Lower leg skin (tissue), 4 donors: ENCODE measurements at regions of chr5 and their contacts with region 1.

Region 1: DNA sequence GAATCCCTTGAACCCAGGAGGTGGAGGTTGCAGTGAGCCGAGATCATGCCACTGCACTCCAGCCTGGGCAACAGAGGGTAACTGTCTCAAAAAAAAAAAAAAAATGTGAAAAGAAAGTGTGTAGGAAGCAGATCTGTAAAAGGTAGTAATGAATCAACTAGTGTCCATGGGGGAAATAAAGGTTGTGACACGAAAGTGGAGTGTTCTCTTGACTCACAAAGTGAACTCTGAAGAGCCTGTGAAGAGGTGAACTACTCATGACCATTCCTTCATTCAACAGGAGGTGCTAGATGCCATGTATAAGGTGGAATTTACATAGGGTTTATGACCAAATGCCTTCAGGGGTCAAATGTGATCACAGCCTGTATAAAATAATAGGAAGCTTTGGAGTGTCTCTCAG is 12.8 kb downstream of the IQGAP2 start:
- DNase-seq: no peak
- H3K4me3 ChIP-seq: no peak overlapping the region
- CTCF ChIP-seq: no peak
- POLR2A ChIP-seq: no peak

Region 2: GRCh38 chr5:76379316-76379715 is 36.5 kb before region 1 on chr5:
- intact Hi-C with region 1: loop called (anchors 1 kb)
- DNase-seq: no peak
- H3K4me3 ChIP-seq: no peak overlapping the region
- CTCF ChIP-seq: no peak
- POLR2A ChIP-seq: no peak

Region 3: DNA sequence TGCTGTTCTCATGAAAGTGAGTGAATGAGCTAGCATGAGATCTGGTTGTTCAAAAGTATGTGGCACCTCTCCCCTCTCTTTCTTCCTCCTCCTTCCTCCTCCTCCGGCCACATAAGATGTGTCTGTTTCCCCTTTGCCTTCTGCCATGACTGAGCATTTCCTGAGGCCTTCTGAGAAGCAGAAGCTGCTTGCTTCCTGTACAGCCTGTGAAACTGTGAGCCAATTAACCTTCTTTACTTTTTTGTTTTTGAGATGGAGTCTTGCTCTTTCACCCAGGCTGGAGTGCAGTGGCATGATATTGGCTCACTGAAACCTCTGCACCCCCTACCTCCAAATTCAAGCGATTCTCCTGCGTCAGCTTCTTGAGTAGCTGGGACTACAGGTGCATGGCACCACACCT is 440.1 kb after region 1 on chr5:
- intact Hi-C with region 1: no loop called
- DNase-seq: no peak
- H3K4me3 ChIP-seq: no peak overlapping the region
- CTCF ChIP-seq: no peak
- POLR2A ChIP-seq: no peak

Region 4: DNA sequence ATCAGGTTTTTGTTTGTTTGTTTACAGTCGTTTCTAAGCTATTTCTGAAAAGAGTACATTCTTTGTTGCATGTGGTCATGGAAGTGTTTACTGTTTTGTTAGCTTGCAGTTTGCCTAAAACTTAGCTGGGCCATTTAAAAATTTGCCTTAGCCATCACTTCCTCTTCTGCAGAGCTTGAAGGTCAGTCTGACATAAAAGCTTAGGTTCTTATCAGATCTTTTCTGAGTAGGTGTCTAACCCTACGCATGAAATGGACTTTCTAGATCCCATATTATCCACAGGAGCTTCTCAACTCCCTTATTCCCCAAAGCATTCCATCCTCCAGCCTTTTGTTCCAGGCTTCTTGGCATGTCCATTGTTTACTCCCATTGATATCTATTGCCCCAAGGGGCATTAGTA is 1788.4 kb after region 1 on chr5:
- intact Hi-C with region 1: no loop called
- DNase-seq: no peak
- H3K4me3 ChIP-seq: no peak overlapping the region
- CTCF ChIP-seq: no peak
- POLR2A ChIP-seq: no peak